Panc1 (cell line): ENCODE measurements at regions of chr15 and their contacts with region 1.

Region 1: DNA sequence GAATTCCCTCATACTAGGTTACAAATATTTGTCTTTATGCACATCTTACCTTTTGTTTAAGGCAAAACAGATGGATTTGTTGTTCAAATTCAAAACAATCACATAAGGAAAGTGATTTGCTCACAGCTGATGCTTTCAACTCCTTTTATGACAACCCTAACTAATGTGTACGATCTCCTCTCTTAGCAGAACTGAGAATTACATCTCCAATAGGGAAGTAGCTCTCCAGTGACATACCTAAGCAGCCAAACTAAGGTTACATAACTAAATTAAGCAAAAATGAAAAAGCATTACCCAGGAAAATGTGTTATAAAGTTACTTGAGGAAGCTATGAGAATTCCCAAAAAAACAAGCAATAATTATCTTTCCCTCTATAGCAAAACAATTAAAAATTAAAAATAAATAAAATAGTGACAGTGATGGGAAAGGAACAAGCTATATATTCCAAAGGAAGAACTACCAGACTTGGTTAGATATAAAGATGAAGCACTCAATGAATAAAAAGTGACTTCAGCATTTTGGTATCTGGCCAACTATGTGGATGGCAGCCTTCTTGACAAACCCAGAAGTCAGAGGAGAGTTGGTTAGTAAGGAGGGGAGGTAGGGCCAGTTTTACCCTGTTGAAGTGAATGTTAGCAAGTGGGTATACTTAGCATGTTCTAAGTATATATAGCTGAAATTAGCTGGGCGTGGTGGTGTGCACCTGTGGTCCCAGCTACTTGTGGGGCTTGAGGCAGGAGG is 32.4 kb downstream of the PEAK1 start:
- DNase-seq: no peak
- ATAC-seq: no peak
- H3K4me3 ChIP-seq: no peak overlapping the region
- H3K27ac ChIP-seq: no peak overlapping the region
- H3K4me1 ChIP-seq: peaks cover 4% of the 10 kb centered on the region; the same call in 1 of the 2 replicates
- H3K27me3 ChIP-seq: no peaks in the 10 kb centered on the region
- CTCF ChIP-seq: no peak

Region 2: DNA sequence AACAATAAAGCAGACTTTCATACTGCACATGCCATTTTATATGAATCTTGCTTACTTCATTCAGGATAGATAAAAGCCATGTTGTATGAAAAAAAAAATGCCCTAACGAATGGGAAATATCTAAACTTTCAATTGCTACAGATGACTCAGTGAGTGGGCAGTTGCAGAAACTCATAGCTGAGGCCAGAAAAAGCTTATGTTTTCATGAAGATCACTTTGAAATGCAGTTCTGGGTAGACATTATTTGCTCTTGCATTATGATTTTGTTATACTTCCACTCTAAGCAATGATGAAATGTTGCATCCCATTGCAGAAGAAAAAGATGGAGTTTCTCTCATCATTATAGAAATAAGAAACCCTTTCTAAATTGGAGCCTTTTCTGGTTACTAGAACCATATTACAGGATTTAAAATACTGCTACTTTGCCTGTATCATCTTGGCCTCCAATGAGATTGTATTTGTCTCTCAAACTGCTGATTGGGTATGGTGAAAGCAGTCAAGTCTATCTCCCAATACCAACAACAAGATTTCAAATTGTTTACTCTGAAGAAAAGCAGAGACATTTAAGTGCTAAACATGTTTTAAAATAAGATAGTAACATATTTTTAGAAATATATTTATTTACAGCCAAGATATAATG is 15.3 kb after region 1 on chr15:
- CTCF ChIA-PET with region 1: no interaction called
- POLR2A ChIA-PET with region 1: interaction called, 17 read pairs
- in situ Hi-C with region 1: no loop called
- intact Hi-C with region 1: no loop called
- DNase-seq: no peak
- ATAC-seq: no peak
- H3K4me3 ChIP-seq: no peak overlapping the region
- H3K27ac ChIP-seq: no peak overlapping the region; the same call in 1 of the 2 replicates
- H3K4me1 ChIP-seq: no peaks in the 10 kb centered on the region; the same call in 1 of the 2 replicates
- H3K27me3 ChIP-seq: no peaks in the 10 kb centered on the region
- CTCF ChIP-seq: no peak